HepG2 (cell line): ENCODE measurements at regions of chr7 and their contacts with region 1.

Region 1: GRCh38 chr7:77657427-77658224 is 38.6 kb upstream of the RSBN1L start:
- DNase-seq: peak; percentile 53
- ATAC-seq: peak; percentile 73
- H3K4me3 ChIP-seq: no peak overlapping the region
- H3K27ac ChIP-seq: no peak overlapping the region
- H3K4me1 ChIP-seq: peaks cover 6% of the 10 kb centered on the region
- H3K27me3 ChIP-seq: no peaks in the 10 kb centered on the region
- CTCF ChIP-seq: peak; percentile 74
- EP300 ChIP-seq: no peak
- POLR2A ChIP-seq: no peak
- RAD21 ChIP-seq: peak; percentile 55

Region 2: DNA sequence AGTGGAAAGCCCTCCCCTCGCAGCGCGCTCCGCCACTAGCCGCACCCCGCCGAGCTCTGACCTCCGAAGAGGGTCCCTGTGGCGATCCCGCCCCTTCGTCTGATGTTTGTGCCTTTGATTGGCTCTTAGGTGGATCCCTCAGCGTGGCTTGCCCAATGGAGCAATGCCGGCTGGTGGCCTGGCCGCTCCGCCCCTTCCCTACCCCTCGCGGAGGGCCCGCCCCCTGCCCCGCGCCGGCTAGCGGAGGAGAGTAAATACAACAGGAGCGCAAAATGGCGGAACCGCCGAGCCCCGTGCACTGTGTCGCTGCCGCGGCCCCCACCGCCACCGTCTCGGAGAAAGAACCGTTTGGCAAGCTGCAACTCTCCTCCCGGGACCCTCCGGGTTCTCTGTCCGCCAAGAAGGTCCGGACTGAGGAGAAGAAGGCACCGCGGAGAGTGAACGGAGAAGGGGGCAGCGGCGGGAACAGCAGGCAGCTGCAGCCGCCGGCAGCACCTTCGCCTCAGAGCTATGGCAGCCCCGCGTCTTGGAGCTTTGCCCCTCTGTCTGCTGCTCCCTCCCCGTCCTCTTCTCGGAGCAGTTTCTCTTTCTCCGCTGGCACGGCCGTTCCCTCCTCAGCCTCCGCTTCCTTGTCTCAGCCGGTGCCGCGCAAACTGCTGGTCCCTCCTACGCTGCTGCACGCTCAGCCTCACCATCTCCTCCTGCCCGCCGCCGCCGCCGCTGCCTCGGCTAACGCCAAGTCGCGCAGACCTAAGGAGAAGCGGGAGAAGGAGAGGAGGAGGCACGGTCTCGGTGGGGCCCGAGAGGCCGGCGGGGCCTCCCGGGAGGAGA is 38.8 kb after region 1 on chr7 and contains the start of gene RSBN1L:
- CTCF ChIA-PET with region 1: no interaction called
- POLR2A ChIA-PET with region 1: interaction called, 4 read pairs
- in situ Hi-C with region 1: no loop called
- intact Hi-C with region 1: loop called (anchors 5 kb)
- DNase-seq: peak; percentile 96
- ATAC-seq: peak; percentile 95
- H3K4me3 ChIP-seq: peak within 1 kb of the TSS; percentile 99 to 100 (median 100)
- H3K27ac ChIP-seq: peak within 1 kb of the TSS; percentile 87
- H3K4me1 ChIP-seq: peaks cover 57% of the 10 kb centered on the region
- H3K27me3 ChIP-seq: no peaks in the 10 kb centered on the region; a peak in 1 of 5 replicates
- CTCF ChIP-seq: peak; percentile 30; the same call in 1 of the 2 replicates
- EP300 ChIP-seq: no peak
- POLR2A ChIP-seq: peak; percentile 83 to 95
- RAD21 ChIP-seq: 0 out of 2 replicates have a peak, but pooled peaks have one; percentile 14
- total RNA-seq, gene RSBN1L: 21.3 and 25.9 TPM in 2 replicates

Region 3: DNA sequence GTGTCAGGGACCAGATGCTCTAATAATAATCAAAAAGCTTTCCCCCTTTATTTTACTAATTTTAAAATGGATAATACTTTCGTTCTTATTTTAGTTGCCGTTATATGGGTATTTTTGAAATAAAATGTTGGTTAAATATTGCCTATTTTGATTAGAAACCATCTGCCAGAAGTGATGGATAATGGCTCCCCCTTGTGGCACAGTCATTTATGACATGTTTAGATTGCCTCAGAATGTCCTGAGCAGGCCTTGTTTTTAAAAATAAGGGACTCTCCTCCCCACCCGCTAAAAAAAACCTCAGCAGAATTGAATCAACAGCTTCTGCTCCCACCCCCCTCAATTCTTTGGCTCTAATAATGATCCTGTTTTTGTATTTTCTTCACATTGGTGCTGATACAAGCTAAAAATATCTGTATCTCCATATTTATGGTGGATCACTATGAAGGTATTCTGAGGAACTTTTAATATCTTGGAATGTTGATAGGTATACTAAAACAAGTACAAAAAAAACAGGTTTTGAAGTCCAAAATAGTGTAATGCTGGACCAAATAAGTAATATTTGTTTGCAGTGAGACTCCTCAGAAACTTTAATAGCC is 101.8 kb after region 1 on chr7:
- CTCF ChIA-PET with region 1: interaction called, 34 read pairs
- POLR2A ChIA-PET with region 1: no interaction called
- in situ Hi-C with region 1: loop called (anchors 5 kb)
- intact Hi-C with region 1: loop called (anchors 1 kb)
- DNase-seq: peak; percentile 57
- ATAC-seq: peak; percentile 69
- H3K4me3 ChIP-seq: no peak overlapping the region
- H3K27ac ChIP-seq: no peak overlapping the region
- H3K4me1 ChIP-seq: peaks cover 4% of the 10 kb centered on the region; the same call in 1 of the 2 replicates
- H3K27me3 ChIP-seq: no peaks in the 10 kb centered on the region
- CTCF ChIP-seq: peak; percentile 74
- EP300 ChIP-seq: no peak
- POLR2A ChIP-seq: no peak
- RAD21 ChIP-seq: peak; percentile 77

Region 4: DNA sequence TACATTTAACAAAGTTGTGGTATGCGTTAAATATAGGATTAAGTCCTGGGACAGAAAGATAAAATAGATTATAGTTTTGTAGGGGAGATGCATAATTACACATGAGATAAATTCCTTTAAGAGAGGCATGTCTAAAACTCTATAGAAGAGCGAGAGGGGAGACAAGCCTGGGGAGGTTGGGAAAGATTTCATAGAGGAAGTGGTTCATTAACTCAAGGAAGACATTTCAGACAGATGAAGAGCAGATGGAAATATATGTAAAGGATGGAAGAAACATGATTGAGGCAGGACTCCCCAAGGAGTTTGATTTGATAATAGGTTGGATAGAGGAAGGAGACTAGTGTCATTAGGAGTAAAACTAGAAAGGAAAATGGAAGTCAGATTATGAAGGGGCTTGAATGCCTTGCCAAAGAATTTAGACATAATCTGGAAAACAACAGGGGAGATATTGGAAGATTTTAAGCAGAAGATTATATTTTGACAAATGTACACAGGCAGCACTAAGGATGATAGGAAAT is 237.0 kb after region 1 on chr7:
- CTCF ChIA-PET with region 1: no interaction called
- POLR2A ChIA-PET with region 1: no interaction called
- in situ Hi-C with region 1: no loop called
- intact Hi-C with region 1: loop called (anchors 10 kb)
- DNase-seq: no peak
- ATAC-seq: no peak
- H3K4me3 ChIP-seq: no peak overlapping the region
- H3K27ac ChIP-seq: no peak overlapping the region
- H3K4me1 ChIP-seq: no peaks in the 10 kb centered on the region
- H3K27me3 ChIP-seq: no peaks in the 10 kb centered on the region
- CTCF ChIP-seq: no peak
- EP300 ChIP-seq: no peak
- POLR2A ChIP-seq: no peak
- RAD21 ChIP-seq: no peak